Heart left ventricle (tissue), 16 donors: ENCODE measurements at regions of chr5 and their contacts with region 1.

Region 1: GRCh38 chr5:142699184-142699720 is 13.4 kb upstream of the FGF1 start:
- DNase-seq: peak; percentile 89 to 92 (median 90)
- ATAC-seq: peak; percentile 80 to 89 (median 86)
- H3K4me3 ChIP-seq: no peak overlapping the region
- H3K27ac ChIP-seq: peak overlapping the region; percentile 79 to 96 (median 88)
- H3K4me1 ChIP-seq: peaks cover 7 to 51% (median 30%) of the 10 kb centered on the region in 12 donors
- H3K27me3 ChIP-seq: no peaks in the 10 kb centered on the region
- CTCF ChIP-seq: peak; percentile 95 to 99 (median 98)
- POLR2A ChIP-seq: no peak

Region 2: GRCh38 chr5:141992349-141992963 is 706.8 kb before region 1 on chr5:
- intact Hi-C with region 1: loop called in 2 of 10 experiments (anchors 10 kb)
- DNase-seq: peak in 4 of 5 donors; percentile 54 to 65 (median 65)
- ATAC-seq: peak; percentile 59 to 78 (median 72)
- H3K4me3 ChIP-seq: no peak overlapping the region
- H3K27ac ChIP-seq: peak overlapping the region in 1 of 12 donors; percentile 11
- H3K4me1 ChIP-seq: peaks cover 0 to 16% (median 6%) of the 10 kb centered on the region in 12 donors
- H3K27me3 ChIP-seq: no peaks in the 10 kb centered on the region
- CTCF ChIP-seq: peak; percentile 71 to 91 (median 80)
- POLR2A ChIP-seq: no peak

Region 3: DNA sequence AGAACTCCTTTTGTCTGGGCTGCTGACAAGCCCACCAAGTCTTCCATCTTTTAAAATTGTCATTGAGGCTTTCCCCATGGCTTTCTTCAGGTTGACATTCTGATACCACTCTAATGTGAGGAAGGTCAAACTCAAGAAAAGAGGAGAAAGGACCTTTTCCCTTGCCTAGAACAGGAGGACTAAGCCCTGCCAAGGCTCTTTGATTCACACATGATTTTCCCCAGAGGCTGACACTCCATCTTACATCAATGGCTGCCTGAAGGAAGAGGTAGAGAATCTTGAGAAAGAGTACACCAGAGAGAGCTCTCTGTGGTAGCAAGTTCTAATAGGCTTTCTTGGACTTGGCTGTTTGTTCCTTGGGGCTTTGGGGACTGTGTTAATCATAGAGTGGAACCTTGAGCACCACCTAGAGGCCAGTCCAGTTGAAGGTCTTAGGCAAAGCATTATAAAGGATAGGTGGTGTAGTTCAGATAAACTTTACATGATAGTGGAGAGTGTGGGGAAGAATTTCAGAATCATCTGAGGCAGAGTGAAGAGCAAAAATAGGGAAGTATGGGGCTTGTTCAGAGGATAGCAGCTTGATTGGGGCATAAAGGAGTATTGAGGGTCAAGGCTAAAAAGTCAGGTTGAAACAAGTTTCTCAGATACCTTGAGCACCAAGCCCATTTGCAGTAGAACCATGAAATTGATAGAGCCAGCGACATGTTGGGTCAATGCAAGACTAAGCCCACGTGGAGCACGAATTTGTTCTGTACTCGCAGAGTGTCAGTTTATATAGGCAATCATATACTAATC is 553.9 kb before region 1 on chr5:
- intact Hi-C with region 1: loop called in 8 of 10 experiments (anchors 5 to 10 kb)
- DNase-seq: peak in 4 of 5 donors; percentile 60 to 70 (median 66)
- ATAC-seq: peak; percentile 67 to 88 (median 84)
- H3K4me3 ChIP-seq: no peak overlapping the region
- H3K27ac ChIP-seq: no peak overlapping the region
- H3K4me1 ChIP-seq: peaks cover 0 to 5% (median 0%) of the 10 kb centered on the region in 12 donors
- H3K27me3 ChIP-seq: no peaks in the 10 kb centered on the region
- CTCF ChIP-seq: peak; percentile 54 to 79 (median 69)
- POLR2A ChIP-seq: no peak

Region 4: DNA sequence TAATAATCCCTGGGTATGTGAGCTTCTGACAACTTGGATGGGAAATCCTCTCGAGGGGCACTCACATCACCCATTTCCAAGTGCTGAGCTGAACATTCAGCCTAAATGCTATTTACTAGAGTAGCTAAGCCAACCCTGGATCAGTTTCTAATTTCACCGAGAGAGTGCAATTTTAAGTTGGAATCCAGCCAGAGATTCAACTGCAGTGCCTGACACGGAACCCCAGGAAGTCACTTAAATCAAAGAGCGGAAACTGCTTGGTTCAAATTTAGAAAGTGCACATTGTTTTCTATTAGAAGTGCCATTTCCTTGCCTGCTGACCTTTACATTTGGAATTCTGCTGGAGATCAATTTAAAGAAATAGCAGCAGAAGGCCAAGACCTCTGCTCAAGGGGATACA is 383.2 kb before region 1 on chr5:
- intact Hi-C with region 1: loop called in 1 of 10 experiments (anchors 10 kb)
- DNase-seq: no peak
- ATAC-seq: peak in 3 of 4 donors; percentile 16 to 38 (median 32)
- H3K4me3 ChIP-seq: peak overlapping the region in 6 of 12 donors; percentile 2 to 29 (median 20)
- H3K27ac ChIP-seq: peak overlapping the region in 11 of 12 donors; percentile 27 to 97 (median 83)
- H3K4me1 ChIP-seq: peaks cover 20 to 98% (median 84%) of the 10 kb centered on the region in 12 donors
- H3K27me3 ChIP-seq: peaks cover 0 to 4% (median 0%) of the 10 kb centered on the region in 9 donors
- CTCF ChIP-seq: no peak
- POLR2A ChIP-seq: no peak

Region 5: GRCh38 chr5:142655339-142656267 is 43.6 kb before region 1 on chr5:
- intact Hi-C with region 1: loop called (anchors 1 to 2 kb)
- DNase-seq: peak; percentile 81 to 92 (median 88)
- ATAC-seq: peak; percentile 85 to 94 (median 91)
- H3K4me3 ChIP-seq: peak overlapping the region in 1 of 12 donors; percentile 2
- H3K27ac ChIP-seq: peak overlapping the region in 11 of 12 donors; percentile 33 to 82 (median 63)
- H3K4me1 ChIP-seq: peaks cover 0 to 61% (median 25%) of the 10 kb centered on the region in 12 donors
- H3K27me3 ChIP-seq: no peaks in the 10 kb centered on the region
- CTCF ChIP-seq: peak; percentile 97 to 100 (median 99)
- POLR2A ChIP-seq: no peak